WTC11 (cell line): ENCODE measurements at regions of chr20 and their contacts with region 1.

Region 1: GRCh38 chr20:32762149-32762753 is at the start of gene DNMT3B:
- DNase-seq: peak; percentile 98
- ATAC-seq: peak; percentile 77; the same call in 1 of the 2 replicates
- H3K4me3 Mint-ChIP-seq: peak within 1 kb of the TSS; percentile 91
- H3K27ac Mint-ChIP-seq: peak within 1 kb of the TSS; percentile 73
- H3K4me1 Mint-ChIP-seq: peaks cover 45% of the 10 kb centered on the region
- H3K27me3 Mint-ChIP-seq: no peaks in the 10 kb centered on the region
- CTCF ChIP-seq: no peak
- total RNA-seq, gene DNMT3B: 638 to 682 TPM (median 641 TPM) in 3 replicates

Region 2: DNA sequence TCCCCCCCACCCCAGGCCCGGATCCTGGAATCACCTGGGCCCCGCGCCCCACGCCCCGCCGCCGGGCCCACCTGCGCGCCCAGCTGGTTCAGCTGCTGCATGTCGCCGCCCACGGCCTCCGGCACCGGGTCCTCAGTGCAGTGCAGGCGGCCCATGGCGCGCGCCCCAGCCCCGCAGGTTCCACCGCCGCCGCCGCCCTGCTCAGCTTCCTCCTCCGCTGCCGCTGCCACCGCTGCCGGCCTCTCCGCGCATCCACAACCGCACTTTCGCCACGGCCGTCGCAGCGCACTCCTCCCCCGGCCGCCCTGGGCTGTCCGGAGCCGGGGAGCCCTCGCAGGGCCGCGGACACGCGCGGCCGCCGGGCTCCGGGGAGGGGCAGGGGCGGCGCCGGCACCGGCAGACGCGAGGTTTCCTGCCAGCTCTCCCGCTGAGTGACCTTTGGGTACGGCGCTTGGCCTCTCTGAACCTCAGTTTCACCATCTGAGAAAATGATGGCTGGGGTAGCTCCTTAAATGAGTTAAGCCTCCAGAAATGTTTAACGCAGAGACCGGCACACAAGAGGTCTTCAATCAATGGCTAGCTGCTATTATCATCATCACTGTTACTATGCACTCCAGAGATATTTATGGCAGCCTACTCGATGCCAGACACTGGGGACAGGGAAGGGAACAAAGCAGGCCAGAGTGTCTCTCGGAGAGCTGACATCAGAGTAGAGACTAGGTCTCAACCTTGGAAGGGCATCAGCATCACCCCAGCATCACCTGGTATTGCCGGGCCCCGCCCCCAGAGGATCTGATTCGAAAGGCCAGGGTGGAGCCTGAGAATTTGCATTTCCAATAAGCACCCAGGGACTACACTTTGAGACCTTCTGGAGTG is 18.8 kb before region 1 on chr20 and contains the start of gene COMMD7:
- CTCF ChIA-PET with region 1: interaction called, 8 read pairs
- POLR2A ChIA-PET with region 1: interaction called, 23 read pairs
- DNase-seq: peak; percentile 71
- ATAC-seq: peak; percentile 83
- H3K4me3 Mint-ChIP-seq: peak within 1 kb of the TSS; percentile 98
- H3K27ac Mint-ChIP-seq: peak within 1 kb of the TSS; percentile 98
- H3K4me1 Mint-ChIP-seq: peaks cover 43% of the 10 kb centered on the region
- H3K27me3 Mint-ChIP-seq: no peaks in the 10 kb centered on the region
- CTCF ChIP-seq: no peak
- total RNA-seq, gene COMMD7: 41.8 to 42.4 TPM (median 42.3 TPM) in 3 replicates